Heart left ventricle (tissue), 16 donors: ENCODE measurements at regions of chr1 and their contacts with region 1.

Region 1: GRCh38 chr1:157963713-157964112 is 29.7 kb upstream of the KIRREL1 start:
- DNase-seq: peak; percentile 50 to 74 (median 60)
- ATAC-seq: peak; percentile 66 to 84 (median 80)
- H3K4me3 ChIP-seq: no peak overlapping the region
- H3K27ac ChIP-seq: no peak overlapping the region
- H3K4me1 ChIP-seq: peaks cover 0 to 9% (median 5%) of the 10 kb centered on the region in 12 donors
- H3K27me3 ChIP-seq: peaks cover 0 to 31% (median 0%) of the 10 kb centered on the region in 9 donors
- CTCF ChIP-seq: peak; percentile 87 to 97 (median 94)
- POLR2A ChIP-seq: no peak

Region 2: GRCh38 chr1:157849229-157849875 is 114.4 kb before region 1 on chr1:
- intact Hi-C with region 1: no loop called
- DNase-seq: no peak
- ATAC-seq: peak in 1 of 4 donors; percentile 44
- H3K4me3 ChIP-seq: no peak overlapping the region
- H3K27ac ChIP-seq: peak overlapping the region in 1 of 12 donors; percentile 76
- H3K4me1 ChIP-seq: peaks cover 0 to 22% (median 0%) of the 10 kb centered on the region in 12 donors
- H3K27me3 ChIP-seq: peaks cover 0 to 6% (median 0%) of the 10 kb centered on the region in 9 donors
- CTCF ChIP-seq: no peak
- POLR2A ChIP-seq: no peak

Region 3: DNA sequence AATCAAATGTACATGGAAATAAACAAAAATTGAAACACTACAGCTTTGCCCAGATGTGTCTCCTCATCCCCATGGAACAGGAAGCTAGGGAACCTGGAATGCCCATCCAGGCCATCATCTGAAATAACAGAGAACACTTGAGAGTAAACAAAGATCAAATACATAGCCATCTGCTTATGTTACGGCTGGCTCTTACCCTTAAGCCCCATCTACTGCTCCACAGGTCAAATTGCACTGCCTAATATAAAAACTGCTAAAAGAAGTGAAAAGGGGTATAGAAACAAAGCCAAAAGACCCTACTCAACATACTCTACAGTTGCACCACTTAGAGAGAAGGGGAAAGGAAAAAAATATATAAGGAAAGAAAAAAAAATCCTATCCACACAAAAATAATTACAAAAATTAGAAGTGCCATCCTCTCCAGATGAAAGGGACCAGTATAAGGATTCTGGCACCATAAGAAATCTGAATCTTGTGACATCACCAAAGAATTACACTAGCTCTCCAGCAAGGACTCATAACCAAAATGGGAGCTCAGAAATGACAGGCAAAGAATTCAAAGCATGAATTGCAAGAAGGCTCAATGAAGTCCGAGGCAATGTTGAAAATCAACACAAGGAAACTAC is 563.6 kb after region 1 on chr1:
- intact Hi-C with region 1: loop called in 2 of 10 experiments (anchors 10 kb)
- DNase-seq: no peak
- ATAC-seq: peak in 1 of 4 donors; percentile 38
- H3K4me3 ChIP-seq: no peak overlapping the region
- H3K27ac ChIP-seq: no peak overlapping the region
- H3K4me1 ChIP-seq: no peaks in the 10 kb centered on the region
- H3K27me3 ChIP-seq: no peaks in the 10 kb centered on the region
- CTCF ChIP-seq: peak in 9 of 12 donors; percentile 30 to 68 (median 48)
- POLR2A ChIP-seq: no peak

Region 4: GRCh38 chr1:158998781-158999161 is 1035.1 kb after region 1 on chr1:
- intact Hi-C with region 1: loop called in 2 of 10 experiments (anchors 5 kb)
- DNase-seq: peak in 3 of 5 donors; percentile 28 to 64 (median 59)
- ATAC-seq: peak; percentile 45 to 57 (median 56)
- H3K4me3 ChIP-seq: peak overlapping the region; percentile 13 to 65 (median 50)
- H3K27ac ChIP-seq: peak overlapping the region; percentile 55 to 93 (median 82)
- H3K4me1 ChIP-seq: peaks cover 0 to 25% (median 4%) of the 10 kb centered on the region in 12 donors
- H3K27me3 ChIP-seq: no peaks in the 10 kb centered on the region
- CTCF ChIP-seq: peak; percentile 84 to 97 (median 92)
- POLR2A ChIP-seq: no peak